Esophagus muscularis mucosa (tissue), 4 donors: ENCODE measurements at regions of chr22 and their contacts with region 1.

Region 1: GRCh38 chr22:39532215-39533071 is at the start of gene RPS19BP1:
- DNase-seq: peak; percentile 99
- H3K4me3 ChIP-seq: peak within 1 kb of the TSS; percentile 78 to 95 (median 86)
- H3K27ac ChIP-seq: peak within 1 kb of the TSS; percentile 91 to 96 (median 92)
- H3K4me1 ChIP-seq: peaks cover 51 to 63% (median 58%) of the 10 kb centered on the region in 4 donors
- H3K27me3 ChIP-seq: no peaks in the 10 kb centered on the region
- CTCF ChIP-seq: peak in 1 of 3 experiments; percentile 27
- EP300 ChIP-seq: no peak
- POLR2A ChIP-seq: peak; percentile 77
- total RNA-seq, gene RPS19BP1: 158 to 202 (median 177) TPM

Region 2: DNA sequence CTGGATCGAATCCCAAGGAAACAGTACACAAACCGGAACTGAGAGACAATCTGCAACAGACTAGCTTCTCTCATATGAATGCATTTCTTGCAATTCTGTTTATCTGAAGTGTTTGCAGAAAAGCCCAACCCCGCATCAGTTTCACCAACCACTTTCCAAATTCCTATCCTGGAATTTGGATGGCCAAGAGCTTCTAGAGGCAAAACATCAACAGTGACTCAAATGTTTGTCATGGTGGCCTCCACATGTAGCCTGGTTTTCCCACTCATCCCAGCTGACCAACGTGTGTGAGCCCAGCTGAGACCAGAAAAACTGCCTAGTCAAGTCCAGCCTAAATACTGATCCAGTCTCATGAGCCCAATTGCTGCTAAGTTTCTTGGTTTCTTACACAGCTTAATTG is 38.7 kb before region 1 on chr22:
- intact Hi-C with region 1: loop called (anchors 2 kb)
- DNase-seq: no peak
- H3K4me3 ChIP-seq: no peak overlapping the region
- H3K27ac ChIP-seq: no peak overlapping the region
- H3K4me1 ChIP-seq: peaks cover 11 to 38% (median 26%) of the 10 kb centered on the region in 4 donors
- H3K27me3 ChIP-seq: peaks cover 0 to 9% (median 0%) of the 10 kb centered on the region in 4 donors
- CTCF ChIP-seq: no peak
- EP300 ChIP-seq: no peak
- POLR2A ChIP-seq: no peak

Region 3: GRCh38 chr22:40024201-40025061 is 492.0 kb after region 1 on chr22:
- intact Hi-C with region 1: loop called (anchors 5 kb)
- DNase-seq: no peak
- H3K4me3 ChIP-seq: no peak overlapping the region
- H3K27ac ChIP-seq: no peak overlapping the region
- H3K4me1 ChIP-seq: peaks cover 4 to 11% (median 10%) of the 10 kb centered on the region in 4 donors
- H3K27me3 ChIP-seq: peaks cover 0 to 26% (median 0%) of the 10 kb centered on the region in 4 donors
- CTCF ChIP-seq: peak; percentile 75 to 88 (median 84)
- EP300 ChIP-seq: no peak
- POLR2A ChIP-seq: no peak

Region 4: DNA sequence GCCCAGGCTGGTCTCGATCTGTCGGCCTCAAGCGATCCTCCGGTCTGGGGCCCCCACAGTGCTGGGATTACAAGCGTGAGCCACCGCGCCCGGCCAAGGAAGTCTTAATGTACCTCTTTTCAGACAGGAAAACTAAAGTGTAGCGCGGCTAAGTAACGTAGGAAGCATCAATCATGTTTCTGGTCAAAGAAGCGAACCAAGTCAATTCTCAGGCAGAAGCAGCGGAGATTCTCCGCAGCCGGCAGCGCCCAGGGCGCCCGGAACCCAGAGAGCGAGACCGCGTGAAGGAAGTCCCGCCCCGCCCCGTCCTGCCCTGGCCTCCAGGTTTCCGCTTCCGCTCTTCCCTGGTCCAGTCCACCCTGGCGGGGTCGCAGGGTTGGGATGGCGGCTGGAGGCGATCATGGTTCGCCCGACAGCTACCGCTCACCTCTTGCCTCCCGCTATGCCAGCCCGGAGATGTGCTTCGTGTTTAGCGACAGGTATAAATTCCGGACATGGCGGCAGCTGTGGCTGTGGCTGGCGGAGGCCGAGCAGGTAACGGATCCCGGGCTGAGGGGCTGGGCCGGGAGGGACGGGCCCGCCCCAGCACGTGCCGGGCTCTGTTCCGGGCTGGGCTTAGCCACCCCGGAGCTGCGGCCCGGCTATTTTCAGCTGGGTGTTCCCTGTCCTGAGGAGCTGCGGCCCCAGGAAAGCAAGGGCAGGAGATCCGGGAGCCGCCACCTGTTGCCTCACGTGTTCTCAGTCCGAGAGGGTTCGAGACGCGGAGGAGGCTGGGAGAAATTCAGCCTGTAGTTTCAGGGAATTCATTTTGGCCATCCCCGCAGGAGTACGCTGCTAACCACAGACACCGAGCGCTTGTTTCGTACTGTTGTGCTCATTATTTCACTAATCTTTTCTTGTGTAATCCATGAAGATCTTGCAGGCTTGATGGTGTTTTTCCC is 814.0 kb after region 1 on chr22 and contains the start of gene ADSL:
- intact Hi-C with region 1: loop called (anchors 5 kb)
- DNase-seq: peak; percentile 97
- H3K4me3 ChIP-seq: peak within 1 kb of the TSS; percentile 67 to 93 (median 81)
- H3K27ac ChIP-seq: peak within 1 kb of the TSS; percentile 86 to 90 (median 88)
- H3K4me1 ChIP-seq: peaks cover 20 to 32% (median 29%) of the 10 kb centered on the region in 4 donors
- H3K27me3 ChIP-seq: no peaks in the 10 kb centered on the region
- CTCF ChIP-seq: peak in 2 of 3 experiments; percentile 9 to 34
- EP300 ChIP-seq: no peak
- POLR2A ChIP-seq: peak; percentile 91
- total RNA-seq, gene ADSL: 58.7 to 91.1 (median 76.3) TPM